K562 (cell line): ENCODE measurements at regions of chr4 and their contacts with region 1.

Region 1: DNA sequence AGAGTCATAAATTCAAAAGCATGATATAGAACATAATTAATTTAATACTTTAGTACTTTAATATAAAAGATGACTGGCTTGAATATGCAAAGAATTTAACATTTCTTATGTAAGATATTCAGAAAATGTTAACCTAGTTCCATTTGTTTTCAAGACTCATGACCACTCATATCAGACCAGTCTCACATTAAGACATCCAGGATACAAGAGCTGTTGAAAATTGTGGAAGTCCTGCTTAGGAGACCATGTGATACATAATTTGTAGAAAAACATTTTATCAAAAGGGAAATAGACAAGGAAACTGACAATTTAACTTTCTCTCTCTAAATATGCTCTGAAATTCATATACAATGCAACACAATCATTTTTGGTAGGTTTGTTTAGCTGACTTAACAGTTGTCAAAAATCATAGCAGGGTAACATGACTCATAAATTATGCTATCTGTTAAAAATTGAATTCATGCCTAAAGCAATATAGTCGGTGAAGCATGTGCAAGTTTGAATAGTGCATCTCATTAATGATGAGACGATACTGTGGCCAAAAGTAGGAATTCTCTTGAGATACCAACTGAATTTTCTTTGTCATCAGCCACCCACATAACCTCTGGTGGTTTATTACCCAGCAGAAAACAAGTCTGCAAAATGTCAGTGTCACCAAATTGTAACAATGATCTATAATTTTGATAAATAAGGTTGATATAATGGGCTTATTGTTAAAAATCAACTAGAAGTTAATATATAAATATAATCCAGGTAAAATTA is 211.4 kb downstream of the GASK1B start:
- DNase-seq: no peak
- ATAC-seq: no peak
- H3K4me3 ChIP-seq: no peak overlapping the region
- H3K27ac ChIP-seq: no peak overlapping the region
- H3K4me1 ChIP-seq: no peaks in the 10 kb centered on the region
- H3K27me3 ChIP-seq: no peaks in the 10 kb centered on the region
- CTCF ChIP-seq: no peak
- EP300 ChIP-seq: no peak
- POLR2A ChIP-seq: no peak
- RAD21 ChIP-seq: no peak

Region 2: DNA sequence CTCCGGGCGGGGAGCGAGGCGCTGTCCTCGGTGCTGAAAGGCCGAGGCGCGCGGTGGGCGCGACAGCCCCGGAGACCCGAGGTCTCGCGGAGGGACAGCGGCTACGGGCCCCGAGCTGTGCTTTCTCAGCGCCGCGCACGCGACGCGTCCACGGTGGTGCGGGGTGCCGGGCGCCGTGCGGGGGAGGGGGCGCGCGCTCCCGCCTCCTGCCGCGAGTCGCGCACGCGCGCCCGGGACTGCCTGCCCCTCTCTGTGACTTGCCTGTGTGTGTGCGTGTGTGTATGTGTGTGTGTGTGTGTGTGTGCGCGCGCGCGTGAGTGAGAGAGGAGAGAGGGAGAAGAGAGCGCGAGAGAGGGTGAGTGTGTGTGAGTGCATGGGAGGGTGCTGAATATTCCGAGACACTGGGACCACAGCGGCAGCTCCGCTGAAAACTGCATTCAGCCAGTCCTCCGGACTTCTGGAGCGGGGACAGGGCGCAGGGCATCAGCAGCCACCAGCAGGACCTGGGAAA is 741.0 kb before region 1 on chr4 and contains the start of gene GRIA2:
- CTCF ChIA-PET with region 1: no interaction called
- POLR2A ChIA-PET with region 1: no interaction called
- in situ Hi-C with region 1: loop called (anchors 25 kb)
- intact Hi-C with region 1: no loop called
- DNase-seq: peak; percentile 4 to 14 (median 7)
- ATAC-seq: peak; percentile 42; the same call in 1 of the 3 replicates
- H3K4me3 ChIP-seq: no peak within 1 kb of the TSS
- H3K27ac ChIP-seq: no peak within 1 kb of the TSS
- H3K4me1 ChIP-seq: no peaks in the 10 kb centered on the region
- H3K27me3 ChIP-seq: no peaks in the 10 kb centered on the region
- CTCF ChIP-seq: no peak
- EP300 ChIP-seq: no peak
- POLR2A ChIP-seq: no peak
- RAD21 ChIP-seq: no peak
- polyA plus RNA-seq, gene GRIA2: 0.07 TPM in 1 of 2 experiments, not detected in the other